A549 (cell line): ENCODE measurements at regions of chr19 and their contacts with region 1.

Region 1: GRCh38 chr19:46661020-46661731 is at the start of gene DACT3:
- DNase-seq: peak; percentile 100
- ATAC-seq: peak; percentile 84 to 95
- H3K4me3 ChIP-seq: peak within 1 kb of the TSS; percentile 44
- H3K27ac ChIP-seq: peak within 1 kb of the TSS in 1 of 2 experiments; percentile 38; a peak in 2 of 6 replicates
- H3K4me1 ChIP-seq: peaks cover 20% of the 10 kb centered on the region
- CTCF ChIP-seq: no peak
- EP300 ChIP-seq: no peak
- POLR2A ChIP-seq: no peak
- RAD21 ChIP-seq: no peak
- polyA plus RNA-seq, gene DACT3: 0.13 and 0.36 TPM in 2 replicates

Region 2: GRCh38 chr19:46537136-46538097 is 123.8 kb before region 1 on chr19:
- CTCF ChIA-PET with region 1: interaction called, 10 read pairs
- POLR2A ChIA-PET with region 1: no interaction called
- DNase-seq: peak; percentile 55 to 59
- ATAC-seq: peak; percentile 84 to 89
- H3K4me3 ChIP-seq: no peak overlapping the region
- H3K27ac ChIP-seq: no peak overlapping the region
- H3K4me1 ChIP-seq: no peaks in the 10 kb centered on the region
- CTCF ChIP-seq: peak; percentile 77
- EP300 ChIP-seq: no peak
- POLR2A ChIP-seq: no peak
- RAD21 ChIP-seq: 0 out of 5 replicates have a peak, but pooled peaks of 1 of the 2 experiments have one; percentile 12

Region 3: GRCh38 chr19:46600384-46601317 is 60.5 kb before region 1 on chr19:
- CTCF ChIA-PET with region 1: interaction called, 483 read pairs
- POLR2A ChIA-PET with region 1: interaction called, 29 read pairs
- DNase-seq: peak; percentile 98 to 100
- ATAC-seq: peak; percentile 85 to 92
- H3K4me3 ChIP-seq: peak overlapping the region; percentile 94
- H3K27ac ChIP-seq: peak overlapping the region; percentile 96 to 97
- H3K4me1 ChIP-seq: peaks cover 23% of the 10 kb centered on the region
- CTCF ChIP-seq: no peak
- EP300 ChIP-seq: no peak
- POLR2A ChIP-seq: peak; percentile 87
- RAD21 ChIP-seq: no peak

Region 4: DNA sequence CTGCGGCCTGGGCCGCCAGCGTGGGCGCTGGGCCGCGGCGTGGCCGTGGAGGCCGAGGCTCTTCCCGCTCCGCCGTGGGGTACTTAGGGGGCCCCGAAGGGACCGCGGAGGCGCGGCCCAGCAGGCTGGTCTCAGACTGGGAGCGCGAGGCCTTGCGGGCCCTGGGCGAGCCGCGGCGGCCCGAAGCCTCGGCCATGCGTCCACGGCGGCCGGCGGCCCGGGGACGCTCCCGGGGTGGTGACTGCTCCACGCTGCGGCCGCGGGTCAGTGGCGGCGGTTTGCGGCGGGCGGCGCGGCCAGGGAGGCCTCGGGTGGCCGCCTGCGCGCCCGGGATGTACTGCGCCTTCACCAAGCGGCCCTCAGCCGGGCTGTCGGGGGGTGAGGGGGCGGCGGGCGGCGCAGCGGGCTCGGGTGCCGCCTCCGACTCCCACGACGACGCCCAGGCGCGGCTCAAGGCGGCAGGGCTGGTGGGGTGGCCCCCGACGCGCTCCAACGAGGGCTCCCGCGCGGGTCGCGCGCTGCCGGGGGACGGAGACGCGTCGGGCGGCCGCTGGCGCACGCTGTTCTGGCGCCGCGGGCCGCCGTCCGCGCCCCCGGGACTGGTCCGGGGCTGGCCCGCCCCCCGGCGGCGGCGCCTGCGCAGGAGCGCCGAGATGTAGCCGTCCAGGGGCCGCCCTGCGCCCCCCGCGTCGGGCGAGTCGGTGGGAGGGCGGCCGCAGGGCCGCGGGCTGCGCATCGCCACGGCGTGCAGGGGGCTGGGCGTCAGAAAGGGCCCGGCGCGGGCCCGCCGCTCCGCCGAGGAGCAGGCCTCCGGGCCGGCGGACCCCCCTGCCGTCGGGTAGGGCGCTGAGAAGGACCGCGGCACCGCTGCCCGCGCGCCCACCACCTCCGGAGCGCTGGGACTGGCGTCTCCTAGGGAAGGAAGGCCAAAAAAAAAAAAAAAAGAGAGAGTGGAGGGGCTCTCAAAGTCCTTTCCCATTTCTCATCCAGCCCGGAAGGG is 11.9 kb before region 1 on chr19:
- CTCF ChIA-PET with region 1: interaction called, 31 read pairs
- POLR2A ChIA-PET with region 1: interaction called, 5 read pairs
- DNase-seq: no peak
- ATAC-seq: no peak
- H3K4me3 ChIP-seq: no peak overlapping the region
- H3K27ac ChIP-seq: no peak overlapping the region
- H3K4me1 ChIP-seq: no peaks in the 10 kb centered on the region
- CTCF ChIP-seq: no peak
- EP300 ChIP-seq: no peak
- POLR2A ChIP-seq: no peak
- RAD21 ChIP-seq: no peak

Region 5: GRCh38 chr19:46687438-46688145 is 26.4 kb after region 1 on chr19:
- CTCF ChIA-PET with region 1: interaction called, 28 read pairs
- POLR2A ChIA-PET with region 1: interaction called, 5 read pairs
- DNase-seq: no peak
- ATAC-seq: no peak
- H3K4me3 ChIP-seq: no peak overlapping the region
- H3K27ac ChIP-seq: no peak overlapping the region
- H3K4me1 ChIP-seq: no peaks in the 10 kb centered on the region
- CTCF ChIP-seq: no peak
- EP300 ChIP-seq: no peak
- POLR2A ChIP-seq: no peak
- RAD21 ChIP-seq: no peak

Region 6: GRCh38 chr19:46704379-46705076 is 43.4 kb after region 1 on chr19:
- CTCF ChIA-PET with region 1: interaction called, 17 read pairs
- POLR2A ChIA-PET with region 1: no interaction called
- DNase-seq: peak; percentile 64 to 90
- ATAC-seq: peak; percentile 80 to 90
- H3K4me3 ChIP-seq: no peak overlapping the region
- H3K27ac ChIP-seq: no peak overlapping the region
- H3K4me1 ChIP-seq: no peaks in the 10 kb centered on the region
- CTCF ChIP-seq: peak; percentile 88
- EP300 ChIP-seq: no peak
- POLR2A ChIP-seq: no peak
- RAD21 ChIP-seq: peak; percentile 44 to 62

Region 7: GRCh38 chr19:46745030-46745429 is 83.9 kb after region 1 on chr19:
- CTCF ChIA-PET with region 1: no interaction called
- POLR2A ChIA-PET with region 1: no interaction called
- DNase-seq: no peak
- ATAC-seq: peak in 1 of 2 experiments; percentile 13; a peak in 3 of 6 replicates
- H3K4me3 ChIP-seq: peak overlapping the region; percentile 98
- H3K27ac ChIP-seq: peak overlapping the region; percentile 99 to 100
- H3K4me1 ChIP-seq: peaks cover 17% of the 10 kb centered on the region
- CTCF ChIP-seq: no peak
- EP300 ChIP-seq: no peak
- POLR2A ChIP-seq: no peak
- RAD21 ChIP-seq: no peak

Region 8: DNA sequence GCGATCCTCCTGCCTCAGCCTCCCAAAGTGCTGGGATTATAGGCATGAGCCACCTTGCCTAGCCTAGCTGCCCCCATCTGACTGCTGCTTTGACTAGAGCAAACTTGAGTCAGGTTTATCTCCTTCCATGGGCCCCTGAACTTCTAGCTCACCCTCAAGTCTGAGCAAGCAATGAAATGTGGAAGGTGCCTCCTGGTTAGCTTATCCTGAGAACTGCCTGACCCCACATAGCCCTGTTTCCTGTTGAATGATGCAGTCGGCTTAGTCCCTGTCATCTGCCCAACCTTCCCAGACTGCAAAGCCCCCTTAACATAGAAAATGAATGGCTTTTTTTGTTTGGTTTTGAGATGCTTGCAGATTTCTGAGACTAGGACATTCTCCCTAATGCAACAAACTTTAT is 396.2 kb after region 1 on chr19:
- CTCF ChIA-PET with region 1: no interaction called
- POLR2A ChIA-PET with region 1: no interaction called
- DNase-seq: no peak
- ATAC-seq: peak in 1 of 2 experiments; percentile 30; a peak in 3 of 6 replicates
- H3K4me3 ChIP-seq: no peak overlapping the region
- H3K27ac ChIP-seq: no peak overlapping the region
- H3K4me1 ChIP-seq: no peaks in the 10 kb centered on the region
- CTCF ChIP-seq: no peak
- EP300 ChIP-seq: no peak
- POLR2A ChIP-seq: no peak
- RAD21 ChIP-seq: no peak